ENCODE measurements at regions of chr9 and their contacts with region 1.

Region 1: GRCh38 chr9:95167998-95168397 is 149.5 kb downstream of the FANCC start:
- DNase-seq: peak in 28 of 35 experiments; percentile 3 to 72 (median 30)
- ATAC-seq: peak in 2 of 4 experiments; percentile 40 to 47
- H3K4me3 ChIP-seq: no peak overlapping the region
- H3K4me3 Mint-ChIP-seq: no peak overlapping the region
- H3K27ac ChIP-seq: no peak overlapping the region
- H3K27ac Mint-ChIP-seq: no peak overlapping the region
- H3K4me1 ChIP-seq: no peaks in the 10 kb centered on the region
- H3K4me1 Mint-ChIP-seq: peaks cover 0 to 7% (median 1%) of the 10 kb centered on the region in 3 donors
- H3K27me3 ChIP-seq: no peaks in the 10 kb centered on the region
- H3K27me3 Mint-ChIP-seq: no peaks in the 10 kb centered on the region

Region 2: DNA sequence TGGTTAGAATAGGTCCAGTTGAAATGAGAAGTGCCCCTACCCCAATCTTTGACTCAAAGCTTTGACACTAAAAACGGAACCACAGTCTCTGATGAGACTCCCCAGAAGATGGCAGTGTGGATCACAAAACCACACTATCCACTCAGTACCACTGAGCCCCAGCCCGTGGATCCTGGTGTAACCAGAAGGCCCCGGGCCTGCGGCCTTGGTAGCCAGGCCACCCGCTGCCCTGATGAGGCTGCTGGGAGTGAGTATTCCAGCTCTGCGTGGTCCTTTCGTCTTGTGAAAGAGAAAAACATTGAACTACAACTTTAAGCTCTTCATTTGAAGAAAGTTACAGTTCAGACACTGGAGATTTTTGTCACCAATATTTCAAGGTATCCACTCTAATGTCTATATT is 486.5 kb before region 1 on chr9:
- CTCF ChIA-PET with region 1: interaction called in 1 of 2 experiments, 26 read pairs
- POLR2A ChIA-PET with region 1: no interaction called
- DNase-seq: peak; percentile 13 to 78 (median 49)
- ATAC-seq: peak; percentile 78 to 85 (median 82)
- H3K4me3 ChIP-seq: no peak overlapping the region
- H3K4me3 Mint-ChIP-seq: no peak overlapping the region
- H3K27ac ChIP-seq: no peak overlapping the region
- H3K27ac Mint-ChIP-seq: no peak overlapping the region
- H3K4me1 ChIP-seq: peaks cover 0 to 3% of the 10 kb centered on the region in 2 experiments
- H3K4me1 Mint-ChIP-seq: peaks cover 0 to 4% (median 0%) of the 10 kb centered on the region in 3 donors
- H3K27me3 ChIP-seq: peaks cover 0 to 2% of the 10 kb centered on the region in 2 experiments
- H3K27me3 Mint-ChIP-seq: peaks cover 11 to 19% of the 10 kb centered on the region in 2 donors

Measured in T-cell (primary cell).